ENCODE measurements at regions of chr13 and their contacts with region 1.

Region 1: DNA sequence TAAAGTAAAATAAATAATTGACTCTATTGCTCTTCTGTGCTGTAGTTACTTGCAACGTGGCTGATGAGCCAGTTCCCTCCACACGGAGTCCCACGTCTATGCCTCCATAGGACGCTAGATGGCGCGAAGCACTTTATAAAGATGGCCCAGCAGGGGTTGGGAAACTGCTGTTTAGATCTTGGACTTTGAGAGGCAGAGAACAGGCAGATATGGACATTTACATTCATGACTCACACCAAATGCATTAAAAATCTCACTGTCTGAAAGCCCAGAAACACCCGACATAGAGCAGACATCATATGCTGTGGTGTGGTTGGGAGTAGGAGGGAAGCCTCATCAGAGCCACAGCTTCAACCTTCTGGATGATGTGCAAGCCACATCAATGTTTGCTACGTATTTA is 643.1 kb upstream of the ARGLU1 start:
- H3K4me3 ChIP-seq: no peak overlapping the region
- H3K27ac ChIP-seq: no peak overlapping the region
- H3K4me1 ChIP-seq: no peaks in the 10 kb centered on the region
- CTCF ChIP-seq: no peak

Region 2: GRCh38 chr13:106772006-106772601 is 439.0 kb before region 1 on chr13:
- CTCF ChIA-PET with region 1: no interaction called
- POLR2A ChIA-PET with region 1: no interaction called
- H3K4me3 ChIP-seq: no peak overlapping the region
- H3K27ac ChIP-seq: no peak overlapping the region
- H3K4me1 ChIP-seq: no peaks in the 10 kb centered on the region
- CTCF ChIP-seq: no peak

Region 3: GRCh38 chr13:107296804-107297203 is 85.7 kb after region 1 on chr13:
- CTCF ChIA-PET with region 1: no interaction called
- POLR2A ChIA-PET with region 1: no interaction called
- H3K4me3 ChIP-seq: no peak overlapping the region
- H3K27ac ChIP-seq: no peak overlapping the region
- H3K4me1 ChIP-seq: no peaks in the 10 kb centered on the region
- CTCF ChIP-seq: no peak

Region 4: DNA sequence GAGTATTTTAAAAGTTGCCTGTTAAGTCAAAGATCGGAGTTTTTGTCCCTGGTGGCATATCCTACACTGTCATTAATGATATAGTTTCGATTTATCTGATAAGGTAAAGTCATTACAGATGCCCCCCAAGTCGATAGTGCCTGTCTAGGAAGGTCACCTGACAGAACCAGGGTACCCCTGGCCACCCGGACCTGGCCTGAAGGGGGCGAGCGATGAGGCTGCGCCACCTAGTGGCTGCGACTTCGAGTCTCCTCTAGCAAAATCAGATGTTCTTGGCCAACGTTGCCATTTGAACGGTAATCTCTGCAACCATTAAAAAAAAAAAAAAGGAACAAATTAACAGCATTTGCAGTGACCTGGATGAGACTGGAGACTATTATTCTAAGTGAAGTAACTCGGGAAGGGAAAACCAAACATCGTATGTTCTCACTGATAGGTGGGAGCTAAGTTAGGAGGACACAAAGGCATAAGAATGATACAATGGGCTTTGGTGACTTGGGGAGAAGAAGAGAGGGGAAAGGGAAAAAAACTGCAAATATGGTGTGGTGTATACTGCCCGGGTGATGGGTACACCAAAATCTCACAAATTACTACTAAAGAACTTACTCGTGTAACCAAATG is 439.1 kb after region 1 on chr13:
- CTCF ChIA-PET with region 1: interaction called, 24 read pairs
- POLR2A ChIA-PET with region 1: no interaction called
- H3K4me3 ChIP-seq: no peak overlapping the region
- H3K27ac ChIP-seq: no peak overlapping the region
- H3K4me1 ChIP-seq: no peaks in the 10 kb centered on the region
- CTCF ChIP-seq: no peak

Region 5: GRCh38 chr13:107807306-107808073 is 596.4 kb after region 1 on chr13:
- CTCF ChIA-PET with region 1: no interaction called
- POLR2A ChIA-PET with region 1: no interaction called
- H3K4me3 ChIP-seq: no peak overlapping the region
- H3K27ac ChIP-seq: no peak overlapping the region
- H3K4me1 ChIP-seq: no peaks in the 10 kb centered on the region
- CTCF ChIP-seq: no peak